AG04449 (cell line): ENCODE measurements at regions of chr7 and their contacts with region 1.

Region 1: GRCh38 chr7:108181073-108181985 is 51.2 kb upstream of the LAMB4 start:
- DNase-seq: peak; percentile 12
- H3K4me3 ChIP-seq: no peak overlapping the region
- CTCF ChIP-seq: peak; percentile 47

Region 2: GRCh38 chr7:108200003-108200725 is 18.8 kb after region 1 on chr7:
- CTCF ChIA-PET with region 1: no interaction called
- POLR2A ChIA-PET with region 1: no interaction called
- DNase-seq: no peak
- H3K4me3 ChIP-seq: no peak overlapping the region
- CTCF ChIP-seq: no peak

Region 3: GRCh38 chr7:108308903-108309302 is 127.6 kb after region 1 on chr7:
- CTCF ChIA-PET with region 1: no interaction called
- POLR2A ChIA-PET with region 1: no interaction called
- DNase-seq: no peak
- H3K4me3 ChIP-seq: no peak overlapping the region
- CTCF ChIP-seq: no peak

Region 4: GRCh38 chr7:108452722-108453121 is 271.4 kb after region 1 on chr7:
- CTCF ChIA-PET with region 1: interaction called, 24 read pairs
- POLR2A ChIA-PET with region 1: no interaction called
- DNase-seq: no peak
- H3K4me3 ChIP-seq: no peak overlapping the region
- CTCF ChIP-seq: peak; percentile 46

Region 5: GRCh38 chr7:108459931-108460551 is 278.7 kb after region 1 on chr7:
- CTCF ChIA-PET with region 1: interaction called, 24 read pairs
- POLR2A ChIA-PET with region 1: no interaction called
- DNase-seq: no peak
- H3K4me3 ChIP-seq: no peak overlapping the region
- CTCF ChIP-seq: peak; percentile 53